ENCODE measurements at regions of chr1 and their contacts with region 1.

Region 1: DNA sequence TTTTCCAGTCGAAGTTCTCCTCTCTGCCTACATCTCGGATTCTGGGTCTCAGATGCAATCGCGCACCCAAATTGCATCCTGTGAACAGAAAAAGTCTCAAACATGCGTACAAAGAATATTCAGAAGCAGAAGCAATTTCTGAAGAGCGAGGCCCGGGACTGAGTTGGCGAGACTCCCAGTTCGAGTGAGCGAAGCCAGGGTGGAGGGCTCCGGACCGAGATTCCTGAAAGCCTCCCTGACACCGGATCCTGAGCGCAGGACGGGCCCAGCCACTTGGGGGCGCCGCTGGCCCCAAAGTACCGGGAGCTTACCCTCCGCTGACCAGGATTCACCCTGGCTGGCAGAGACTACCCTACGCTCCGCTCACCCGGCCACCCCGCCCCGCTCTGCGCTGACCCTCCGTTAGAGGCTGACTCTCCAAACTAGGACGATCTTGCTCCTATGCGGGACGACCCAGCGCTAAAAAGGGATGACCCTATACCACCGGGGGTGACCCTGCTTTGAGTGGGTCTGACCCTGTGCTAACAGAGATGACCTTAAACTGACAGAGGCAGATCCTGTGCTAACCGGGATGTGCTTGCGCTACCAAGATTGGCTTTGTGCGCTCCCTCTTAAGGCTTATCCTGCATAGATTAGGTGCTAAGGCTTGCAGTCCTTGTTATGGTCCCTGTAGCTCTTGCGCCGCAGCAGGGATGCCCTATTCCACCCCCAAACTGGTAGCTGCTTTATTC is 12.1 kb downstream of the FOXD2 start:
- DNase-seq: no peak
- H3K4me3 ChIP-seq: no peak overlapping the region
- H3K4me3 Mint-ChIP-seq: peak overlapping the region in 1 of 2 donors; percentile 63
- H3K27ac ChIP-seq: no peak overlapping the region
- H3K27ac Mint-ChIP-seq: no peak overlapping the region
- H3K4me1 ChIP-seq: peaks cover 3 to 4% of the 10 kb centered on the region in 2 donors
- H3K4me1 Mint-ChIP-seq: peaks cover 5% of the 10 kb centered on the region
- H3K27me3 ChIP-seq: peaks cover 67 to 80% of the 10 kb centered on the region in 2 donors
- H3K27me3 Mint-ChIP-seq: peaks cover 50 to 61% (median 60%) of the 10 kb centered on the region in 3 donors
- CTCF ChIP-seq: peak; percentile 25

Region 2: DNA sequence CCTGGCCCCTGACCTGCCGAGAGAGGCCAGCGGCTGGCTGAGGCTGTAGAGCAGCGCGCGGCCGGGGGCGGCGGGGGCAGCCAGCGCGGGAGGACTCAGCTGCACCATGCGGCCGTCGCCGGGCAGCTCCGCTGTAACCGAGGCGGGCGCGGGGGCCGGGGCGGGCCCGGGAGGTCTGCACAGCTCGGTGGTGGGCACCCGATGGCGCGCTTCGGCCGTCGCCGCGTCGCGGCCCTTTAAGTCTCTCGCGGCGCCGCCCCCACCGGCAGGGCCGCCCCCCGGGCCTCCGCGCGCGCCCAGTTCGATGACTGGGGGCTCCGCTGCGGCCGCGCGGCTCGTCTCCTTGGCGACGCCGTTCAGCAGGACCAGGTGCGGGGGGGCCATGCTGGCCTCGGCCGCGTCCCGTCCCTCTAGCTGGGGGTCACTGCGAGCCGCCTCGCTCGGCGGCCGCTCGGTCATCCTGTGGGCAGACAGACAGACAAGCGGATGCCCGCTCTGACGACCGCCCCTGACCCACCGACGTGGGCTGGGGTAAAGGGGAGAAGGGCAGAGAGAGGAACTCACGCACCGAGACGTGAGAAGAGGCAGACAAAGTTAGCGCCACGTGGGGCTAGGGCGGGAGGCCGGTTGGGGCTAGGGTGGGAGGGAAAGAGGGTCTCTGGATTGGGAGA is 224.4 kb before region 1 on chr1:
- intact Hi-C with region 1: loop called in 1 of 2 experiments (anchors 5 kb)
- DNase-seq: no peak
- H3K4me3 ChIP-seq: peak overlapping the region in 1 of 3 experiments; percentile 35
- H3K4me3 Mint-ChIP-seq: peak overlapping the region; percentile 45 to 83
- H3K27ac ChIP-seq: no peak overlapping the region
- H3K27ac Mint-ChIP-seq: no peak overlapping the region
- H3K4me1 ChIP-seq: peaks cover 7 to 11% of the 10 kb centered on the region in 2 donors
- H3K4me1 Mint-ChIP-seq: peaks cover 22% of the 10 kb centered on the region
- H3K27me3 ChIP-seq: peaks cover 67 to 79% of the 10 kb centered on the region in 2 donors
- H3K27me3 Mint-ChIP-seq: peaks cover 50 to 57% (median 55%) of the 10 kb centered on the region in 3 donors
- CTCF ChIP-seq: no peak

Region 3: GRCh38 chr1:47362828-47363227 is 87.2 kb before region 1 on chr1:
- intact Hi-C with region 1: no loop called
- DNase-seq: no peak
- H3K4me3 ChIP-seq: no peak overlapping the region
- H3K4me3 Mint-ChIP-seq: no peak overlapping the region
- H3K27ac ChIP-seq: no peak overlapping the region
- H3K27ac Mint-ChIP-seq: no peak overlapping the region
- H3K4me1 ChIP-seq: no peaks in the 10 kb centered on the region
- H3K4me1 Mint-ChIP-seq: no peaks in the 10 kb centered on the region
- H3K27me3 ChIP-seq: no peaks in the 10 kb centered on the region
- H3K27me3 Mint-ChIP-seq: no peaks in the 10 kb centered on the region
- CTCF ChIP-seq: no peak

Measured in CD14-positive monocyte (primary cell).